ENCODE measurements at regions of chr17 and their contacts with region 1.

Region 1: DNA sequence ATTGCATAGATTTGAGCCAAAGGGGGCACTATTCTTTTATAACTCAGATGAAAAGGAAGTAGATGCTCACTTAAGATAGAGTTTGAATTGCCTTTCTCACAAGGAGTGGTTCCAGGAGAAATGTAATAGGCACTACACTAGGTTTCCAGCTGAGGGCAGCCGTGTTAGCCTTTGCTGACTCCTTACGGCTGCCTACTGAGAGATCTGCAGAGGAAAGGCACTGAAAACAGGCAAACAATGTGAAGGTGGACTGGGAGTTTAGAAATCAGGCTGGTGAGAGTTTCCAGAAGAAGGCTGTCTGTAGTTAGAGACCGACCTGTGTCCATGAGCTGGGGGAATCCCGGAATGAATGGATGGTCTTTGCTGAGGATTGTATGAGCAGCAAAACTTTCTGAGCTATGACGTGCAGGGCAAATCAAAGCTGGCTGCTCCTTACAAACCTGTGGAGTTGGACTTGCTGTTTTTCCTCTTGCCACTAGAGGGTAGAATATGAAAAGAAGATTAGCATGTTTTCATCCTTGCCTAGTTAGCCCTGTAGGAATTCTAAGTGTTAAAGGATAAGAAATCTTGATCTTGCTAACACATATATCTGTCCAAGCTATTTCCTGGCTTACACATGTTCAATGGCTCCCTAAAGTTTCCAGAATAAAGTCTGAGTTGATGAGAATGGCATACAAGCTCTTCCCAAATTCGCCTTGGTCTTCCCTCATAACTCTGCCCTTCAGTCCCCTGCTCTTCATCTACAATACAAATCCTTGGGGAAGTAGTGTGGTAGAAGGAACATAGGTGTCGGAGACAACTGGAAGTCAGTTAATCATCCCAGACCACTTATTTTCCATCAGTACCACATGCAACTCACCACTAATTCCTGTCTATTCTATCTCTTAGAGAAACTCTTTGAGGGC is 20.1 kb upstream of the TAOK1 start:
- DNase-seq: peak; percentile 66
- ATAC-seq: peak; percentile 93
- H3K4me3 Mint-ChIP-seq: no peak overlapping the region
- H3K27ac Mint-ChIP-seq: no peak overlapping the region
- H3K4me1 Mint-ChIP-seq: no peaks in the 10 kb centered on the region
- H3K27me3 Mint-ChIP-seq: no peaks in the 10 kb centered on the region

Region 2: GRCh38 chr17:29384900-29385299 is 14.8 kb after region 1 on chr17:
- CTCF ChIA-PET with region 1: interaction called, 61 read pairs
- POLR2A ChIA-PET with region 1: no interaction called
- intact Hi-C with region 1: no loop called
- DNase-seq: no peak
- ATAC-seq: no peak
- H3K4me3 Mint-ChIP-seq: no peak overlapping the region
- H3K27ac Mint-ChIP-seq: no peak overlapping the region
- H3K4me1 Mint-ChIP-seq: peaks cover 3% of the 10 kb centered on the region
- H3K27me3 Mint-ChIP-seq: no peaks in the 10 kb centered on the region

Region 3: DNA sequence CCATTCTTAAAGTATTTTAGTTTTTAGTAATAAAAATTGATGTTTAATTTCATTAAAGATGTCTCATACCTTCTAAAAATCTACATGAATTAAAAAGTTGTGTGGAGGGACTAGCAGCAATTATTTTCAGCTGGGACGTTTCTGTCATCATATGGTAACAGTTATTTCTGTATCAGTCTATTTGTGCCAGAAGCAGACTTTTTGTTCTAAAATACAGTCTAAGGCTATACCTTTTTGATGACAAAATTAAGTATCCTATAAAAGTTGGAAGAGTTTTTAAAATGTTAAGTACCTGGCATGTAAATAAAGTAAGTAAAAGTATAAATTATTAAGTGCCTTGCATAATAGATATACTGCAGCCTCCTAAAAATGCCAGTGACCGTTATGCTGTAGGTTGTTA is 26.0 kb after region 1 on chr17:
- CTCF ChIA-PET with region 1: interaction called, 12 read pairs
- POLR2A ChIA-PET with region 1: interaction called, 10 read pairs
- intact Hi-C with region 1: no loop called
- DNase-seq: no peak
- ATAC-seq: no peak
- H3K4me3 Mint-ChIP-seq: no peak overlapping the region
- H3K27ac Mint-ChIP-seq: no peak overlapping the region
- H3K4me1 Mint-ChIP-seq: peaks cover 37% of the 10 kb centered on the region
- H3K27me3 Mint-ChIP-seq: no peaks in the 10 kb centered on the region

Region 4: GRCh38 chr17:29514792-29515191 is 144.7 kb after region 1 on chr17:
- CTCF ChIA-PET with region 1: interaction called, 15 read pairs
- POLR2A ChIA-PET with region 1: no interaction called
- intact Hi-C with region 1: no loop called
- DNase-seq: no peak
- ATAC-seq: no peak
- H3K4me3 Mint-ChIP-seq: no peak overlapping the region
- H3K27ac Mint-ChIP-seq: no peak overlapping the region
- H3K4me1 Mint-ChIP-seq: no peaks in the 10 kb centered on the region
- H3K27me3 Mint-ChIP-seq: no peaks in the 10 kb centered on the region

Region 5: GRCh38 chr17:29568331-29569244 is 198.5 kb after region 1 on chr17 and contains the start of gene TP53I13:
- CTCF ChIA-PET with region 1: interaction called, 20 read pairs
- POLR2A ChIA-PET with region 1: no interaction called
- intact Hi-C with region 1: loop called (anchors 2 to 10 kb)
- DNase-seq: peak; percentile 96
- ATAC-seq: peak; percentile 64
- H3K4me3 Mint-ChIP-seq: peak within 1 kb of the TSS; percentile 97
- H3K27ac Mint-ChIP-seq: peak within 1 kb of the TSS; percentile 96
- H3K4me1 Mint-ChIP-seq: peaks cover 30% of the 10 kb centered on the region
- H3K27me3 Mint-ChIP-seq: no peaks in the 10 kb centered on the region
- total RNA-seq, gene TP53I13: 37.7 to 41.5 TPM

Region 6: DNA sequence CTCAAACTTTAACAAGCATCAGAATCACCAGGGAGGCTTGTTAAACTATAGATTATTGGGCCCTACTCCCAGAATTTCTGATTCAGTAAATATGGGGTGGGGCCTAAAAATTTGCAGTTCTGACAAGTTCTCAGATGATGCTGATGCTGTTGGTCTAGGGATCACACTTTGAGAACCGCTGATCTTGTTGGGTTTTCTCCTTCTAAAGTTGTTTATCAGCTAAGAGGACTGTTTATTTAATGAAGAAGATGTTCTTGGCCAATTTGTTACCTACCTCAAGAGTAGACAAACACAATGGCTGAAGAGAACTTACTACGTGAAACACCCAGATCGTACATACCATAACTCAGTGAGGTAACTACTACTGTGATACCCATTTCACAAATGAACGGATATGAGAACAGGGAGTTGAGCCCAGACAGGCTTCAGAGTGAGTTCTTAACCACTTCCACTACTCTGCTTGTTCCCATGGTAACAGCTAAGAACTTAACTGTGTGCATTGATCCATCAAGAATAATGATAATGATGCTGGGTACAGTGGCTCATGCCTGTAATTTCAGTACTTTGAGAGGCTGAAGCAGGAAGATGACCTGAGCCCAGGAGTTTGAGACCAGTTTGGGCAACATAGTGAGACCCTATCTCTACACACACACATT is 661.3 kb after region 1 on chr17:
- CTCF ChIA-PET with region 1: no interaction called
- POLR2A ChIA-PET with region 1: no interaction called
- intact Hi-C with region 1: no loop called
- DNase-seq: no peak
- ATAC-seq: peak; percentile 64
- H3K4me3 Mint-ChIP-seq: no peak overlapping the region
- H3K27ac Mint-ChIP-seq: no peak overlapping the region
- H3K4me1 Mint-ChIP-seq: no peaks in the 10 kb centered on the region
- H3K27me3 Mint-ChIP-seq: no peaks in the 10 kb centered on the region

Measured in activated CD4-positive, alpha-beta T cell treated with anti-CD3 and anti-CD28 coated beads for 36 hours (primary cell).